ENCODE measurements at regions of chr16 and their contacts with region 1.

Region 1: DNA sequence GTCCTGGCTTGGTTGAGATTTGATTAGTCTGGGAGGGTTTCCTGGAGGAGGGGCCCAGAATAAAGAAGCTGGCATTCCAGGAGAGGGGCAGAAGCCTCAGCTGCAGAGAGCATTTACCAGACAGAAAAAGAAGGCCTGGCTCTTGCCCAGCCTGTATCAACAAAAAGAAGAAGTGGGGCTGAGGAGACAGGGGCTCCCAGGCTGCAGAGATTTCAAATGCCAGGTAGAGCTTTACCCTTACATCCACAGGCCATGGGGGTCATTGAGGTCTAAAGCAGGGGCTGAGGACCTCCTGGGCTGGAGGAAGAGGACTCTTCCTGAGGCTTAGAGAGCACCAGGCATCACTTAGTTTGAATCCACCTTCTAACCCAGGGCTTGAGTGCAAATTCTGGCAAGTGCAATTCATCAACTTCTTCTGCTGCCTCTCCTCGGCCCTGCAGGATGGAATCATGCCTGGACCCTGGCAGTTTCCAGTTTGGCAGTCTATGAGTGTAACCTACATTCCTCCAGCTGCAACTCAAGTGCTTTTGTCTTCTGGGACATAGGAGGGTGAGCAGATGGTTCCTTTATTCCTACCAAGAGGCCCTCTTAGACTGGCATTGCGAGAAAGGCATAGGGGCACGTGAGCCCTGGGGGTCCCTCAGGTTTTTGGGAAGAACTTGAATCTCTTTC is 15.3 kb downstream of the CA7 start:
- DNase-seq: no peak
- H3K4me3 ChIP-seq: no peak overlapping the region
- H3K27ac ChIP-seq: no peak overlapping the region
- H3K4me1 ChIP-seq: peaks cover 25% of the 10 kb centered on the region
- H3K27me3 ChIP-seq: no peaks in the 10 kb centered on the region
- CTCF ChIP-seq: no peak

Region 2: DNA sequence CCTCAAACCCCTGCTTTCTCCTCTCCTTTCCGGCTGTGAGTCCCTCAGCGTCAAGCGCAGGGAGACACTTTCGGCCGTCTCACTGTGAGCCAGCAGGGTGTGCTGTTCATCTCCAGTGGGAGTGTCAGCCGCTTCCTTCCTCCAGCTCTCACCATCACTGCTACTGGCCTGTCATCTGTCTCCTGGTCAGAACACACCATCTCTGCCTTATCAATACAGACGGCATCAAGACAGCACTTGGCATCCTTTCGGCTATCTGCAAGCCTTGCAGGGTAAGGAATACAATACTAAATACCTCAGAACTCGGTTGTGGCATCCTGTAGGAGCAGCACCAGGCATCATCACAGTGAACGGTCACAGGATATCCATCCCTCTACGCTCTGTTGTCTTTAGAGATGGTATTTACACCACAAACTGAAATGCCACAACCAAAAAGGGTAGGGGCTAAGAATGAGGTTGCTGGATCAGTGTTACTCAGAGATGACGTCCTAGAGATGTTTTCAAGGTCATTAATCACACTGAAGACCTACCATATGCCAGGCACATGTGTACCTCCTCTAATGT is 142.3 kb before region 1 on chr16:
- CTCF ChIA-PET with region 1: no interaction called
- POLR2A ChIA-PET with region 1: no interaction called
- intact Hi-C with region 1: no loop called
- DNase-seq: peak; percentile 64
- H3K4me3 ChIP-seq: no peak overlapping the region
- H3K27ac ChIP-seq: no peak overlapping the region
- H3K4me1 ChIP-seq: no peaks in the 10 kb centered on the region
- H3K27me3 ChIP-seq: no peaks in the 10 kb centered on the region
- CTCF ChIP-seq: peak; percentile 69

Region 3: GRCh38 chr16:66810391-66810790 is 49.1 kb before region 1 on chr16:
- CTCF ChIA-PET with region 1: no interaction called
- POLR2A ChIA-PET with region 1: no interaction called
- intact Hi-C with region 1: no loop called
- DNase-seq: no peak
- H3K4me3 ChIP-seq: no peak overlapping the region
- H3K27ac ChIP-seq: no peak overlapping the region
- H3K4me1 ChIP-seq: no peaks in the 10 kb centered on the region
- H3K27me3 ChIP-seq: no peaks in the 10 kb centered on the region
- CTCF ChIP-seq: no peak

Region 4: DNA sequence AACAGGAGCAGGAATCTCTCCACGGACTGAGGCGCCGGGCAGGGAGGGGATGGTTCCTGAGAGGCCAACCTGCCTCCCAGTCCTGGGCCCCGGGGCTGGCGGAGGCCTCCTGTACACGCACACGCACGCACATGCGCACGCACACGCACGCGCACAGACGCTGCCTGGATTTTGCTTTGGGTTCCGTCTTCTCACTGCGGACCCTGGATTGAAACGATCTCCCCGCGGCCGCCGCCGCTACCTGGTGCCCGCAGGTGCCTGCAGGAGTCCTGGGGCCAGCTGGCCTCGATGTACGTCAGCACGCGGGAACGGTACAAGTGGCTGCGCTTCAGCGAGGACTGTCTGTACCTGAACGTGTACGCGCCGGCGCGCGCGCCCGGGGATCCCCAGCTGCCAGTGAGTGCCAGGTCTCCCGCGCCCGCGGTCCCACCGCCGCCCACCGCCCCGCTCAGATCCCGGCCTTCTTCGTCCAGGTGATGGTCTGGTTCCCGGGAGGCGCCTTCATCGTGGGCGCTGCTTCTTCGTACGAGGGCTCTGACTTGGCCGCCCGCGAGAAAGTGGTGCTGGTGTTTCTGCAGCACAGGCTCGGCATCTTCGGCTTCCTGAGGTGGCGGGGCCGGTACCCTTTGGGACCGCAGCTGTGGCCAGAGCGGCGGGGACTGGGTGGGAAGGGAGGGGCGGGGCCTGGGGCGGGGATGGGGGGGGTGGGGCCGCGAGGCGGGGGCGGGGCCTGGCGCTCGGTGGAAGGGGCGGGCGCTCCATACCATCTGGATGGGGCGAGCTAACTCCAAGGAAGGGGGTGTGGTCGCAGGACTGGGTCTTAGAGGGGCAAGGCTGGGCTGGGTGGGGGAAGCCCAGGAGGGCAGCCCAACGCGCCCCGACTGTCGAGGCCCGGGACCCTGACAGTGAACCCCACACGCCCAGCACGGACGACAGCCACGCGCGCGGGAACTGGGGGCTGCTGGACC is 141.1 kb after region 1 on chr16:
- CTCF ChIA-PET with region 1: no interaction called
- POLR2A ChIA-PET with region 1: interaction called, 14 read pairs
- intact Hi-C with region 1: no loop called
- DNase-seq: peak; percentile 57
- H3K4me3 ChIP-seq: peak overlapping the region; percentile 41
- H3K27ac ChIP-seq: no peak overlapping the region
- H3K4me1 ChIP-seq: no peaks in the 10 kb centered on the region
- H3K27me3 ChIP-seq: no peaks in the 10 kb centered on the region
- CTCF ChIP-seq: no peak

Measured in A673 (cell line).